ENCODE measurements at regions of chr6 and their contacts with region 1.

Region 1: GRCh38 chr6:133977983-133978895 is 25.2 kb downstream of the TBPL1 start:
- DNase-seq: peak in 1 of 2 donors; percentile 43
- H3K4me3 ChIP-seq: no peak overlapping the region
- H3K27ac ChIP-seq: no peak overlapping the region
- H3K4me1 ChIP-seq: peaks cover 15 to 32% (median 23%) of the 10 kb centered on the region in 4 donors
- H3K27me3 ChIP-seq: no peaks in the 10 kb centered on the region
- CTCF ChIP-seq: no peak
- EP300 ChIP-seq: no peak
- POLR2A ChIP-seq: no peak

Region 2: GRCh38 chr6:134029495-134030455 is 51.5 kb after region 1 on chr6:
- intact Hi-C with region 1: no loop called
- DNase-seq: no peak
- H3K4me3 ChIP-seq: no peak overlapping the region
- H3K27ac ChIP-seq: no peak overlapping the region
- H3K4me1 ChIP-seq: peaks cover 0 to 20% (median 7%) of the 10 kb centered on the region in 4 donors
- H3K27me3 ChIP-seq: no peaks in the 10 kb centered on the region
- CTCF ChIP-seq: no peak
- EP300 ChIP-seq: no peak
- POLR2A ChIP-seq: no peak

Region 3: DNA sequence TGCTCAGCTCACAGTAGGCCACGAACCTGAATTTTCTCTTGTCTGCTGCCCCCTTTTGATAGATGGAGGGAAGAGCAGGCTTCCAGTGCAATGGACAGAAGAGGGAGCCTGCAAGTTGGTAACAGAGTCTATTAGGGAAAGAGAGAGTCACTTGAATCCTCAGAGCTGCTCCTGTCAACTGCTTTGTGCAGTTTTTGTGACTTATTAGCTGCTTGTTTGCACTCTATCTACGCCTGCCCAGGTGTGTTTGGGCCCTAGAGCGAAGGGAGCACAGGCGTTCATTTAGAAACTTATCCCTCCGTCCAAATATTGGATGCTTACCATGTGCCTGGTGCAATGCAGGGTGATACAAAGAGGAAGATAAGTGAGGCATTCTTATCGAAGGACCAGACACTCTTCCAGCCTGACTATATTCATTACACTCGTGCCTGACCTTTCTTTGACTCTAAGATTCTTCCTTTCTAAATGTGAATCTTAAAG is 85.8 kb after region 1 on chr6:
- intact Hi-C with region 1: loop called (anchors 5 kb)
- DNase-seq: peak; percentile 63 to 88
- H3K4me3 ChIP-seq: no peak overlapping the region
- H3K27ac ChIP-seq: peak overlapping the region in 1 of 5 donors; percentile 48
- H3K4me1 ChIP-seq: peaks cover 0 to 36% (median 17%) of the 10 kb centered on the region in 4 donors
- H3K27me3 ChIP-seq: no peaks in the 10 kb centered on the region
- CTCF ChIP-seq: peak in 5 of 7 experiments; percentile 70 to 93 (median 84)
- EP300 ChIP-seq: no peak
- POLR2A ChIP-seq: no peak

Measured in stomach (tissue), 19 donors.